Endothelial cell of umbilical vein (primary cell): ENCODE measurements at regions of chr15 and their contacts with region 1.

Region 1: DNA sequence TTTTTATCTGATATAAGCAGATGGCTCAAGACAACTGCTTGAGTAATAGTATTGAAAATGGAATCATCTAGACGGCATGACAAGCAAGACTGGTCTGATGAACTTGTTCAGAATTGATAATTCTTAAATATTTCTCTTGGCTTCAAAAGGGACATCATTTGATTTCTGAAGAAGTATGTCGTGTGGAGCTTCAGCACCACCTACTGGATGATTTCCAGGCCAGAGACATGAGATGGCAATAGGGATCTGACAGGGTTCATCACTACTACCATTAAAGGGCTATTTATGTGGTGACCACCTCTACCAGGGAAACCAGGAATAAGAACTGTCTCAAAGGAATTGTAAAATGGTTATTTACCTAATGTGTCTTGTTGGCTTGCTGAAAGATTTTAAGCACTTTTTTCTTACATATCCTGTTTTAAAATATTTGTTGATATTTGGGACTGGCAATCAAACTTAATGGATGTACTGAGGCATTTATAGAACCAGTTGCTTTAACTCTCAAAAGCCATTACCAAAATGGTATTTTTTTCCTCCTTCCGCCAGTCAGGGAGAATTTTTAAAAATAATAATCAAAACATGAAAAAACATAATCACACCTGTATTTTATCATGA is 99.5 kb upstream of the FAM98B start:
- DNase-seq: peak; percentile 80
- H3K4me3 ChIP-seq: no peak overlapping the region
- H3K27ac ChIP-seq: no peak overlapping the region
- H3K4me1 ChIP-seq: no peaks in the 10 kb centered on the region
- H3K27me3 ChIP-seq: no peaks in the 10 kb centered on the region
- CTCF ChIP-seq: peak; percentile 62 to 69
- POLR2A ChIP-seq: no peak

Region 2: DNA sequence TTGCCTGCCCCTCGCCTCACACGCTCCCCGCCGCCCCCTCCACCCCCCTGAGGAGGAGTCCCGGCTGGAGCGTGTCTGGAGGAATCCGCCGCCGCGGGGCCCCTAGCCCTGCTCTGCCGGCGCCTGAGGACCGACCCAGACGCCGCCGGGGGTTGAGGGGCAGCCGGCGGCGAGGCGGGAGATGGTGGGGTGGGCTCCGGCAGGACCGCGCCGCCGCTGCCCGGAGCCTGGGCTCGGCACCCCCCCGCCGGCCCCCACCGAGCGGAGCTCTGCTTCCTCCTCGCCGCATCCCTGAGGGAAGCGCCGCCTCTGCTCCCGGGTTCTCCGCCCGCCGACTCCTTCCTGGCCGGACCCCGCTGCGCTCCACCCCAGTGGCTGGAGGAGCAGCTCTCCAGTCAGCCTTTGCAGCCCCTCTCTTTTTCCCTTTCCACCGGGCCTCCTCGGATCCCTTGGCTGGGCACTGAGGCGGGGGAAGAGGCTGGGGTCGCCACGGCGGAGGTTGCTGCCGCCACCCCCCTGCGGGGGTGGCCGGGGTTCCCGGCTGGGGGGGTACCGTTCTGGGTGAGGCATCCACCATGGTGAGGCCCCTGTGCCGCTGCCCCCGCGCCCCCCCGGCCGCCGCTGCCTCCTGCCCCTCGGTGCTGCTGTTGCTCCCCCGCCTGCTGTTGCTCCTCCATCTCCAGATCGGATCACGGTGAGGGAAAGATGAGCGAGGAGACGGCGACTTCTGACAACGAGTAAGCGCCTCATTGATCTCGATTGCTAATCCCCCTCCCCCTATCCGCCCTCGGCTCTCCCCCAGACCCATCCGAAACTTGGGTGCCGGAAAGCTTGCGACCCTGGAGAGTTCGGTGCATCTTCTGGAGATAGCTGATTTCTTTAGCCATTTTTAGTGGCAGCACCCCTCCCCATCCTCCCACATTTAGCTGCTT is 101.7 kb before region 1 on chr15 and contains the start of gene SPRED1:
- CTCF ChIA-PET with region 1: interaction called, 22 read pairs
- POLR2A ChIA-PET with region 1: no interaction called
- dilution Hi-C with region 1: no loop called
- intact Hi-C with region 1: loop called (anchors 1 kb)
- DNase-seq: peak; percentile 69
- H3K4me3 ChIP-seq: peak within 1 kb of the TSS; percentile 77 to 95 (median 91)
- H3K27ac ChIP-seq: peak within 1 kb of the TSS; percentile 69
- H3K4me1 ChIP-seq: peaks cover 22% of the 10 kb centered on the region
- H3K27me3 ChIP-seq: peaks cover 5 to 9% of the 10 kb centered on the region in 2 experiments
- CTCF ChIP-seq: no peak
- POLR2A ChIP-seq: no peak
- total RNA-seq, gene SPRED1: 10.7 and 16.4 TPM in 2 replicates

Region 3: DNA sequence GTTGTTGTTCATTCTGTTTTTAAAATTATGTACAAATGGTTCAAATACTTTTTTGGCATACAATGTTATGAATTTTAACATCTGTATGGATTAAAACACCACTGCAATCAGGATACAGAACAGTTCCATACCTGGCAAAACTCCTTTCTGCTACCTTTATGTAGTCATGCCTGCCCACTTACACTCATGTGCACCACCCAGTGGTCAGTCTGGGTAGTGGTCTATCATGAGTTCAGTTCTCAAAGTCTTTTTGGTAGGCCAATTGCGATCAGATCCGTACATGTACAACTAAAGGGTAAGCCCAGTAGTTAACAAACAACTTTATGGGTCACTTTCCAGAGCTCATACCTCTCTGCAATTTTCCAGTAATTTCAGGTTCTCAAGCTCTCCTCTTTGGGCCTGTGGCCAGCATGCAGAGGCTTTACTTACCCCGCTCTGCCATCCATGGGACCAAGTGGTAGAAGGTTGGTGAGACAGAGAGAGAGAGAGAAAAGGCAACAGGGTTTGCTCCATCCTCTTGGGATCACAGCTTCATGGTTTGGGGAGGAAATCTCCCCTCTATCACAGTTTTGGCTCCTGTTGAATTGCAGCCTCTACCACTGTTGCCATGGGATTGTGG is 35.6 kb after region 1 on chr15:
- CTCF ChIA-PET with region 1: interaction called, 5 read pairs
- POLR2A ChIA-PET with region 1: no interaction called
- dilution Hi-C with region 1: no loop called
- intact Hi-C with region 1: loop called (anchors 2 kb)
- DNase-seq: peak; percentile 68
- H3K4me3 ChIP-seq: no peak overlapping the region
- H3K27ac ChIP-seq: no peak overlapping the region
- H3K4me1 ChIP-seq: no peaks in the 10 kb centered on the region
- H3K27me3 ChIP-seq: peaks cover 0 to under 1% of the 10 kb centered on the region in 2 experiments
- CTCF ChIP-seq: peak; percentile 80 to 84
- POLR2A ChIP-seq: no peak